ENCODE measurements at regions of chr3 and their contacts with region 1.

Region 1: GRCh38 chr3:111723293-111724215 is 128.4 kb upstream of the ZBED2 start:
- DNase-seq: no peak
- ATAC-seq: peak in 5 of 8 donors; percentile 30 to 63 (median 37)
- H3K4me3 ChIP-seq: no peak overlapping the region
- H3K27ac ChIP-seq: peak overlapping the region in 3 of 10 donors; percentile 2 to 46 (median 34)
- H3K4me1 ChIP-seq: peaks cover 0 to 33% (median 13%) of the 10 kb centered on the region in 9 donors
- H3K27me3 ChIP-seq: no peaks in the 10 kb centered on the region
- CTCF ChIP-seq: no peak

Region 2: DNA sequence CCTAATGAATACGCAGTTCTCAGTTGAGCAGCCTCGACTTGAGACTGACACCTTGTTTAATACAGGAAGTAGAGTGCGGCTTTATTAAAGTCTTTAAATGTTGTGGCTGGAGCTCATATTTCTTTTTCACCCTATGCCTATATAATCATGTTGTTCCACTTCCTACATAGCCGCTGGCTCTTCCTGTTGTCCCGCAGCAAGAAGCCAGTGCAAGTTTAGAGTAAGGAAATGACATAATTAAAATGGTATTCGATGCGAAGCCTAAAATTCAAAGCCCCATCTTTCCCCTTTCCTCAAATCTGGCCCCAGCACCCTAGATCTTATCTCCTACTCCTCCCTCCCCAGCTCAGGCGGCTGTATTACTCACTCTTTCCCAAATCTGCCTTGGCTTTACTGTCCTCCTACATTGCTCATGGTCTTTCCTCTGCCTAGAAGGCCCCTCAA is 128.0 kb after region 1 on chr3:
- intact Hi-C with region 1: loop called in 2 of 10 experiments (anchors 5 kb)
- DNase-seq: no peak
- ATAC-seq: peak in 7 of 8 donors; percentile 40 to 85 (median 63)
- H3K4me3 ChIP-seq: no peak overlapping the region
- H3K27ac ChIP-seq: peak overlapping the region in 9 of 10 donors; percentile 16 to 79 (median 48)
- H3K4me1 ChIP-seq: peaks cover 6 to 45% (median 16%) of the 10 kb centered on the region in 9 donors
- H3K27me3 ChIP-seq: no peaks in the 10 kb centered on the region
- CTCF ChIP-seq: no peak

Measured in heart right ventricle (tissue), 16 donors.